Right lobe of liver (tissue), 6 donors: ENCODE measurements at regions of chr6 and their contacts with region 1.

Region 1: DNA sequence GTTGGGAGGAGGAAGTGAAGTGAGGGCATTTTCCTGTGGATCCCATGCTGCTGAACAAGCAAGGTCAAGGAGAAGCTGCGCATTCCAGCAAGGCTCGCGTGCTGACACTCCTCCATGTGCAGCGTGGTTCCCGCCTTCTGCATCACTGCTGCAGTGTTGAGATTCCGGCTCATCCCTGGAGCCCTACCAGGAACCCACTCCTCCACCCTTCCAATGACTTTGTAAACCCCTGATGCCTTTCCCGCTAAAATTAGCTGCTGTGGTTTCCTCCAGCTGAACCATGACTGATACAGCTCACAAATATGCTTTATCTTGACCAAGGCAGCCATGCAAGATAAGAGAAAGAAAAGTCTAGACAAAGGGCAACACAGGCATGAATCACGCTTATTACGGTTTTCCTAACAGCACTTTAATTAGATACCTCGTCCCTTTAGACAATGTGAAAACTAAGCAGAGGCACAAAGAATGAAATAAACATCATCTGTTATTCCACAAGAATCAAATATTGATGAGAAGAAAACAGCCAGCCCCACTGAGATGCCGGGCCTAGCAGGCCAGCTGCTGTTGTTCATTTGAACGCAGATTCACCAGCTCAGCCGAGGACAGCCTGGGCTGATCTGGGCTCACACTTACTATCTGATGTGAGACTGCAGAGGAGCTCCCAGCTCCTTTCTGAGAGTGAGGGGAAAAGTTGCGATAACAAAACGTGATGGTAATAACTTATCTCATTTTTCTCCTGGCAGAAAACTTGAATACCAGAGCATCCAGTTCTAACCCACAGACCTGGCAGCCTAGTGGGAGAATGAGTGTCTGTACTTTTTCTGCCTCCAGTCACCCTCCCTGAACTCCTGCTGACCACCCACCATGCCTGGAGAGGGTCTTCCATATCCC is 14.2 kb upstream of the BNIP5 start:
- DNase-seq: peak in 1 of 3 donors; percentile 34
- ATAC-seq: peak; percentile 30 to 71 (median 57)
- H3K4me3 ChIP-seq: no peak overlapping the region
- H3K27ac ChIP-seq: no peak overlapping the region
- H3K4me1 ChIP-seq: no peaks in the 10 kb centered on the region
- H3K27me3 ChIP-seq: no peaks in the 10 kb centered on the region
- CTCF ChIP-seq: no peak
- POLR2A ChIP-seq: no peak

Region 2: DNA sequence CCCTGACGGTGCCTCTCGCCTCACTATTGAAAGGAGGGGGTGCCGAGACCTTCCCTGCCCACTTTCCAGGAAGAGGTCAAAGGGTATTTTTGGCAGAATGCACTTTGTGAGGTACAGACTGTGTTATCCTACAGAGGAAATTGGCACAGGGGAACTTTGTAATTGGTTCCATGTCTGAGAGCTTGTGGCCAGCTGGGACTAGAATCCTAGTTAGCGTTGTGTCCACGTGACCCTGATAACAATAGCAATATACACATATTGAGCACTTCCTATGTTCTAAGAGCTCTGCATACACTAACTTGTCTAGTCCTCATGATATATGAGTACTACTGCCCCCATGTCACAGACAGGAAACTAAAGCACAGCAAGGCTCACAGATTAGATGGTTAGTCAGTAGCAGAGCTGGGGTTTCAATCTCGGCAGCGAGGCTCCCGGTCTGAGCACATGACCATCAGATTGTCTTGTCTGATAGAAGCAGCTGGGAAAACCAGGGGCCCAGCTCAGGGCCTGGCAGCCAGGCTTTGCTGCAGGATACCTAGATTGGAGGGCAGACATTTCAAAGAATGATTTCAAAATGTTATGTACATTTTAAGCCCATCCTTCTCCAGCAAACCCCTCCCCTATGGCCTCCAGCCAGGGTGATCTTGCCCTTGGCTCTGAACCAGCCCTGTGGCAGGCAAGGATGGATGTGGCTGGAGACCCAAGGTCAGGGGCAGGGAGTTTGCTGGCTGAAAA is 219.2 kb before region 1 on chr6:
- intact Hi-C with region 1: loop called in 1 of 2 experiments (anchors 10 kb)
- DNase-seq: peak; percentile 61 to 74 (median 67)
- ATAC-seq: peak; percentile 54 to 75 (median 62)
- H3K4me3 ChIP-seq: peak overlapping the region in 1 of 3 donors; percentile 51
- H3K27ac ChIP-seq: peak overlapping the region; percentile 21 to 70 (median 55)
- H3K4me1 ChIP-seq: peaks cover 0 to 14% (median 0%) of the 10 kb centered on the region in 4 donors
- H3K27me3 ChIP-seq: no peaks in the 10 kb centered on the region
- CTCF ChIP-seq: no peak
- POLR2A ChIP-seq: no peak

Region 3: DNA sequence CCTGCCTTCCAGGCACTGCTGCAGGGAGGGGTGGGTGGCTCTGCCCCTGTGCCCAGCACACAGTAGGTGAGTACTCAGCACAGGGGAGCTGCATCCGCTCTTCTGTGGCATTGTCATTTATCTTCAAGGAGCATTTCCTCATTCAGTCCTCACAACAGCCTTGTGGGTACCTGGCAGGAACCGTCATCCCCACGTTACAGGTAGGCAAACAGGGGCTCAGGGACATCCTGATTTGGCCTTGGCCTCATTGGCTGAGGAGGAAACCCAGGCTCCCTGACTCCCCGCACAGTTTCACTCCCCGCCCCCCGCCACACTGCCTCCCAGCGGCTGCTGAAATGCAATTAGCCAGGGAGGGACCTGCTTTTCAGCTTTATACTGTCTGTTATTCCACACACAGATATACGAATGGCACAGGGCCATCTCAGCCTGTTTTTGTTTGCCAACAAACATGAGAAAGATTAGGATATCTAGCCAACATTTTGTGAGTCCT is 105.3 kb before region 1 on chr6:
- intact Hi-C with region 1: no loop called
- DNase-seq: no peak
- ATAC-seq: peak; percentile 16 to 54 (median 22)
- H3K4me3 ChIP-seq: no peak overlapping the region
- H3K27ac ChIP-seq: no peak overlapping the region
- H3K4me1 ChIP-seq: no peaks in the 10 kb centered on the region
- H3K27me3 ChIP-seq: no peaks in the 10 kb centered on the region
- CTCF ChIP-seq: no peak
- POLR2A ChIP-seq: no peak

Region 4: GRCh38 chr6:36570264-36570663 is 219.3 kb after region 1 on chr6:
- intact Hi-C with region 1: no loop called
- DNase-seq: no peak
- ATAC-seq: peak in 1 of 4 donors; percentile 12
- H3K4me3 ChIP-seq: no peak overlapping the region
- H3K27ac ChIP-seq: no peak overlapping the region
- H3K4me1 ChIP-seq: peaks cover 0 to 10% (median 0%) of the 10 kb centered on the region in 4 donors
- H3K27me3 ChIP-seq: no peaks in the 10 kb centered on the region
- CTCF ChIP-seq: no peak
- POLR2A ChIP-seq: no peak